ENCODE measurements at regions of chr1 and their contacts with region 1.

Region 1: DNA sequence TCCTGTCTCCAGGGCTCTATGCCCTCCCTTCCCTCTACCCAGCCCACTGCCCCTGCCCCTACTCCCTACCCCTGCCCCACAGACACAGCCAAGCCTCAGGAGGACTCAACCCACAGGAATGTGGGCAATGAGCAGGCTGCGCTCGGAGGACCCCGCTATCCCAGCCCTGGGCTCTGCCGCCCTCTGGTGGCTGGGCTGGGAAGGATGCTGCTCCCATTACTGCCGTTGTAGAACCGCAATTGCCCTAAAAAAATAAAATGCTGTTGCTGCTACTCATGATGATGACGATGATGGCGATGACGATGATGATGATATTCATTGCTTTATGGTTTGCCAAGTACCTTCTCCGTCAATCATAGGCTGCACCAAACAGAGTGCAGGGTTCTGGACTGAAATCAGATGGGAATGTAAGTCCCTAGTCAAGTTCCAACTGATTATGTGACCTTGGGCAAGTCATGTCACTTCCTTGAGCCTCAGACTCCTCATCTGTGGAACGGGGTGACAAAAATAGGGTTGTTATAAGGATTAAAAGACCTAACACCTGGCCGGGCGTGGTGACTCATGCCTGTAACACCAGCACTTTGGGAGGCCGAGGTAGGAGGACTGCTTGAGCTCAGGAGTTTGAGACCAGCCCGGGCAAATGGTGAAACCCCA is 24.6 kb downstream of the ARHGEF19 start:
- DNase-seq: peak; percentile 89
- CTCF ChIP-seq: peak; percentile 97

Region 2: DNA sequence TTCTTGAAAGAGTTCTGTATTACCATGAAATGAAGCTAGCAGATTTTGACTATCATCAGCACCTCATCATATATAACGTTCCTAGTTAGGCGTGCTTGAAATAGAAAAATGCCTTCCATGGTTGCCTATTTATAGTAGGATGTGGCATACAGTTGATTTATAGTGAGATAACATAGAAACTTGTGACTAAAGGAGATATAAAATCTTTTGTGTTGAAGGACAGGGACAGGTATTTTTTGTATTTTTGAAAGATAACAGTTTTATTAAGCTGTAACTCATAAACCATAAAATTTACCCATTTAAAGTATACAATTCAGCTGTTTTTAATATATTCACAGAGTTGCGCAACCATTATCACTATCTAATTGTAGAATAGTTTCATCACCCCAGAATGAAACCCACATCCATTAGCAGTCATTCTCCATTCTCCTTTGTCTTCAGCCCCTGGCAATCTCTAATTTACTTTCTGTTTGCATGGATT is 321.1 kb before region 1 on chr1:
- in situ Hi-C with region 1: no loop called
- DNase-seq: no peak
- CTCF ChIP-seq: no peak

Region 3: DNA sequence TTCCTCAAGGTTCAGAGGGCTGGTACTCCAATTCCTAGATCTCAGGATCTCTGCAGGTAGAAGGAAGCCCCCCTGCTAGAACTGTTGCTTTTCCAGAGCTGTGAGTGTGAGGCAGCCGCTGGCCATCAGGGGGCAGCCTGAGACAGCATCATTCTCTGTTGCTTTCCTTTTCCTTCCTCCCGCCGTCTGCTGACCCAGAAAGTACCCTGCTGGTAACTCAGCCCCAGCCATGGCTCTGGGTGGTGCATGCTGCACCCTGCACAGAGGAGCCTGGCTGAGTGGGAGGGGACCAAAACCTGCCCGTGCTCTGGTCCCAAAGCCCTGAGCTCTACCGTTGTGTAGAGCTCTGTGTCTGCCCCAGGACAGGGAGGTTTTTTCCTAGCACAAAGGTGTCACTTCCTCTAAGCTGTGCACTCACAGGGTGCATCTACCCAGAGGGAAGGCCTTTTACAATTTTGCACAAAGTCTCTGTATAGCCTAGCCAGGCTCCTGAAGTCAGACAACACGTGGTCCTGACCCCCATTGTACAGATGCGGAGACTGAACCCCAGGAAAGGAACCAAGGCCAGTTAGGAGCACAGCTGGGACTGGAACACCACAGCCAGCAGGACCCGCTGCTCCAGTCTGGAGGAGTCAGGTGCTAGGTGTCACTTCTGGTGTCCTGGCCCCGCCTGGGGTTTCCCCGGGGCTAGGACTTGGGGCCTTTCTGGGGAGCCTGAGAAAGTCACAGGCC is 108.8 kb before region 1 on chr1:
- in situ Hi-C with region 1: loop called (anchors 5 kb)
- DNase-seq: peak; percentile 87
- CTCF ChIP-seq: peak; percentile 83